Endothelial cell of umbilical vein (primary cell): ENCODE measurements at regions of chr10 and their contacts with region 1.

Region 1: DNA sequence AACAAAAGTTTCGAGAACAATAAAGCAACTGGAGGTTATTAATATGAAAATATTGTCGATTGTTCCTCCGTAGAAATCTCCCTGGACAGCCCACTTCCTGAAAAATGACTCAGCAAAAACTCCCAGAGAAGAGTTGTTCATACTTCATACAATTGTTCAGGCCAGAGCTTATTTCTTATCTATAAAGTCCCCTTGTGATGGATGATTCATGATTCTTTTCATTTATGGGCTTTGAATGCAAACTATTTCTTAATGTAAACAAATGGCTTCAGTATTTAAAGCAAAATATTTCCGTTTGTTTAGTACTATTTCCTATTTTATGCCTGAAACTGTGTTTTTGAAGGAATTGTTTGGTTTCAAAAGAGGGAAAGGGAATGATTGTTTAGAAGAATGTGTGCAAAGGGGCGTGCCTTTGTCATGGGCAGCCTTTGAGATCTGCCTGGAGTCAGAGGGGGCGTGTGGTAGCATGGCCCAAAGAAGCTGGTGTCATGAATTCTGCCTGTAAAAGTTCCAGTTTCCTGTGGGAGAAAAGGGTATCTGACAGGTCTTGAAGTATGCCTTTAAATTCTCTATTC is 26.2 kb upstream of the EXOC6 start:
- DNase-seq: peak; percentile 97
- H3K4me3 ChIP-seq: no peak overlapping the region
- H3K27ac ChIP-seq: peak overlapping the region; percentile 97
- H3K4me1 ChIP-seq: peaks cover 55% of the 10 kb centered on the region
- H3K27me3 ChIP-seq: no peaks in the 10 kb centered on the region
- CTCF ChIP-seq: no peak
- POLR2A ChIP-seq: peak; percentile 60

Region 2: GRCh38 chr10:92592761-92593618 is 229.2 kb before region 1 on chr10 and contains the start of gene KIF11:
- CTCF ChIA-PET with region 1: interaction called, 7 read pairs
- POLR2A ChIA-PET with region 1: no interaction called
- dilution Hi-C with region 1: no loop called
- intact Hi-C with region 1: loop called (anchors 5 kb)
- DNase-seq: peak; percentile 98
- H3K4me3 ChIP-seq: peak within 1 kb of the TSS; percentile 75 to 95 (median 93)
- H3K27ac ChIP-seq: peak within 1 kb of the TSS; percentile 83
- H3K4me1 ChIP-seq: peaks cover 33% of the 10 kb centered on the region
- H3K27me3 ChIP-seq: no peaks in the 10 kb centered on the region
- CTCF ChIP-seq: no peak
- POLR2A ChIP-seq: peak; percentile 96
- total RNA-seq, gene KIF11: 42.6 and 42.8 TPM in 2 replicates

Region 3: DNA sequence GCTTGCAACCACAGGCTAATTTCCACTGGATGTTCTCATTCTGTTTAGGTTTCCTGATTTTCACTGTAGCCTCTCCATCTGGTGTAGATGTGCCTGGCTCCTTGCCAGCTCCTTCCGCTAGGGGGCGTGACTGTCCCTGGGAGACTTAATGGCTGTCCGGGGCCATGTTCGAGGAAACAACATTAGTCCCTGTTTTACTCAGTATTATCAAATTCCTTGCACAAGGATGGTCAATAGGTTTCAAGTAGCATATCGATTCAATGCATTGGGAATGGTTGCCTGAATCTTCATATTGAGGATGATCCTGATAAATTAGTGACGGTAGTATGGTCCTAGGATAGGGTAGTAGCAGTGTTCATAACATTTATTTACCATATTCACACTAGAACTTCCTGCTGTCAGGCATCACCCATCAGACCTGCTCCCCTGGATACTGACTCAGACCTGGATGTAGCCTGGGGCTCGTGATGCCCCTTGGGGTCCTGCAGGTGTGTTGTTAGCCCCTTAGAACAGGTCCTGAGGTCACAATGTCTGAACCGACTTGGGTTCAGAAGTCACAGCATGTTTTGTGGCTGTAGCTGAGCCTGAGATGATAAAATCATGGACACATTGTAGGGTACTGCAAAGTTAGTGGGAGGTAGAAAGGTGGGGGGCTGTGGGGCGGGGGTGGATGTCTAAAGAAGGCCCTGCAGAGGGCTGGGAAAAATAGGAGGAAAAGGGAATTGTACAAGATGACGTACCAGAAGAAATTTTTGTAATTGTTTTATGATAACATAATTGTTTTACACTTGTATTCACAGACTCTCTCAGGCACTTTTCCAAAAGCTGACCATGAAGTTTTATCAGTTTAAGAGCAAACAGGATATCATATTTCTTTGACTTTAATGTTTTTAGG is 17.3 kb after region 1 on chr10:
- CTCF ChIA-PET with region 1: interaction called, 60 read pairs
- POLR2A ChIA-PET with region 1: interaction called, 3 read pairs
- dilution Hi-C with region 1: no loop called
- intact Hi-C with region 1: loop called (anchors 1 kb)
- DNase-seq: peak; percentile 97
- H3K4me3 ChIP-seq: peak overlapping the region in 1 of 3 experiments; percentile 2
- H3K27ac ChIP-seq: peak overlapping the region; percentile 97
- H3K4me1 ChIP-seq: peaks cover 76% of the 10 kb centered on the region
- H3K27me3 ChIP-seq: no peaks in the 10 kb centered on the region
- CTCF ChIP-seq: peak; percentile 26 to 31
- POLR2A ChIP-seq: no peak

Region 4: DNA sequence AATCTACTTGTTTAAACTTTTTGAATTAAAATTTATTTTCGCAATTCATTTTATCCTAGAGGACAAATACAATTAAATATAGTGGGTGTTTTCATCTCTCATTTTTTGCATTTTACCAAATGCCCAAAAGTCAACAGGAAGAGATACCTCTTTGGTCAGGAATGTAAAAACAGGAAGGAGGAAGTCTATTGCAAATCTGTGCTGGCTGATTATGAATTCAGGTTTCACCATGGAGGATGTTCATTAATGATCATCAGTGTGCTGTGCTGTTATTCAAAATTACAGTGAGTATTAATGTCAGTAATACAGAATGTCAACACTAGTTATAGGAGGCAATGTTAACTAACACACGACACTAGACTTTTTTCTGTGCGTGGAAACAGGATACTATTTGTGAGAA is 50.9 kb after region 1 on chr10:
- CTCF ChIA-PET with region 1: interaction called, 14 read pairs
- POLR2A ChIA-PET with region 1: no interaction called
- dilution Hi-C with region 1: no loop called
- intact Hi-C with region 1: loop called (anchors 2 kb)
- DNase-seq: peak; percentile 92
- H3K4me3 ChIP-seq: peak overlapping the region in 1 of 3 experiments; percentile 40
- H3K27ac ChIP-seq: peak overlapping the region; percentile 72
- H3K4me1 ChIP-seq: peaks cover 68% of the 10 kb centered on the region
- H3K27me3 ChIP-seq: no peaks in the 10 kb centered on the region
- CTCF ChIP-seq: no peak
- POLR2A ChIP-seq: peak; percentile 62

Region 5: DNA sequence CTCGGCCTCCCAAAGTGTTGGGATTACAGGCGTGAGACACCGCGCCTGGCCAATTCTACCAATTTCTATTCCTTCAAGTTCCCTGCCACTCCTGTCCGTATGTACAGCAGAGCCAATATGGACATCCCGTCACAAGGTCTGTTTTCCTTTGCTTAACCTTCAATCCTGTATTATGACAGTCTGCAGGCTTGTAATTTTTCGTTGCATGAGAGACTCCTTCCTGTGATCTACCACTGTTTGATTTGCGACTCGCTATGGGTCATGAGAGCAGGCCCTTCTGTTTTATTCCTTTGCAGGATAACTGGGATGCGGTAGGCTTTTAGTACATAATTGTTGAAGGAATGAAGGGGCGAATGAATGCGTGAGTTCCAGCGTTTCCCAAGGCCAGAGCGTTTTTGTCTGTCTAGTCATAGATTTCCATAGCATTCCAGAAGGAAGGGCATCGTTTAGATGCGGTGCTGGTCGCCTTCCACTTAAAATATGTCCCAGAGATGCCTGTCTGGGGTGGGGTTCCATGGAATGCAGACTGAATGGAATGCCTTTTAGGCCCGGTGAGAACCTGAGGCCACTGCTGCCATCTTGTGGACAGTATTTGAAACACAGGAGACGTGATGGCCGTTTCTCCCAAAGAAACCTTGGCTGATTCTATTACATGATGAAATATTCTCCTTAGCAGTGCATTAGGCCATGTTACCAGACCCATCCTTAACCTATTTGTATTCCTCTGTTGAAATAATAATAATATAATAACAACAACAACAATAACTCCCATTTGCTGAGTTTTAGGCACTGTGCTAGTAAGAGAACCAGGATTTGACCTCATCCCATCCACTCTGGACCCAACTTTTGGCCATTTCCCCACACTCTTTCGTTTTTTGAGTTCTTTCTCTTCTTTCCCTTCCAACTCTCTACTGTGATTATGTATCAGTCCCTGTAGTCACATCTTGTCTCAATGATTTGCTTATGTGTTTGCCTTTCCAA is 466.8 kb after region 1 on chr10:
- CTCF ChIA-PET with region 1: no interaction called
- POLR2A ChIA-PET with region 1: no interaction called
- dilution Hi-C with region 1: no loop called
- intact Hi-C with region 1: loop called (anchors 2 kb)
- DNase-seq: peak; percentile 71
- H3K4me3 ChIP-seq: no peak overlapping the region
- H3K27ac ChIP-seq: peak overlapping the region; percentile 8
- H3K4me1 ChIP-seq: peaks cover 2% of the 10 kb centered on the region
- H3K27me3 ChIP-seq: no peaks in the 10 kb centered on the region
- CTCF ChIP-seq: peak; percentile 77 to 83
- POLR2A ChIP-seq: no peak